OCI-LY7 (cell line): ENCODE measurements at regions of chr19 and their contacts with region 1.

Region 1: DNA sequence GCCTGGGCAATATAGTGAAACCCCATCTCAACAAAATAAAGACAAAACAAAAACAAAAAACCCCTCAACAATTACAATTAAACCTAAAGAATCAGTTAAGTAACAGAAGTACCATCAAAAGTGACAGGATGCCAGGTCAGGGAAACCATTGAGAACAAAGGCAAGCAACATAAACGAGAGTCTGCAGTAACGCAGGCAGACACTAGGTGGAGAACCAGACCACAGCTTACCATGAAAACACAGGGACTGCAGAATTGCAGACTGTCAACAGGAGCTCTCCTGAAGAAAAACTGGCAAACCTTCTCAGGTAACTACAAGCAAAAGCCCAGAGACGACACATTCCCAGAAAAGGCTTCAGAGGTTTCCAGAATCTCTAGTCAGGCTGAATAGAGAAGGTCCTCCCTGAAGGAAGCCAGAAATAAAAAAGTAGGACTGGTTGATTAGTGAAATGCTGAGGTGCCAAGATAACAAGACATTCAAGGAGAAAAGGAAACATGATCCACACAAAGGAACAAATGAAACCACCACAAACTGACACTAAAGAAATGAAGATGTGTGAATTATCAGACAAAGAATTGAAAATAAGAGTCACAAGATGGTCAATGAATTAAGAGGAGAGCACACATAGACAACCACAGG is 2.2 kb upstream of the ZNF665 start:
- DNase-seq: peak; percentile 87
- H3K4me3 ChIP-seq: no peak overlapping the region
- H3K27ac ChIP-seq: no peak overlapping the region
- H3K4me1 ChIP-seq: peaks cover 35% of the 10 kb centered on the region
- CTCF ChIP-seq: peak; percentile 91

Region 2: DNA sequence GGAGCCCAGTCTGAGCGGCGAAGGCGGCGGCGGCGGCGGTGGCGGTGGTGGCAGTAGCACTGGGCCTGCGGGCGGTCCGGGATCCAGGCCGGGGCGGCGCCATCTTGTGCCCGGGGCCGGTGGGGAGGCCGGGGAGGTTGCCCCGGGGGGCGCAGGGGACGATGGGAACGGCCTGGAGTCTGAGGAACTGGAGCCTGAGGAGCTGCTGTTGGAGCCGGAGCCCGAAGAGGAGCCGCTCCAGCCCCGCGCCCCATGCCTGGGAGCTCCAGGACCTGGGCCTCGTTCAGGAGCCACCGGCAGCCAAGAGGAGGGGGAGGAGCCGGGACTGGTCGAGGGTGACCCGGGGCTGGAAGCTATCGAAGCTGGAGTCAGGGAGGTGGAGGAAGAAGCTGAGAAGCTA is 385.6 kb before region 1 on chr19:
- CTCF ChIA-PET with region 1: no interaction called
- POLR2A ChIA-PET with region 1: no interaction called
- intact Hi-C with region 1: no loop called
- DNase-seq: no peak
- H3K4me3 ChIP-seq: no peak overlapping the region
- H3K27ac ChIP-seq: no peak overlapping the region
- H3K4me1 ChIP-seq: no peaks in the 10 kb centered on the region
- CTCF ChIP-seq: no peak

Region 3: DNA sequence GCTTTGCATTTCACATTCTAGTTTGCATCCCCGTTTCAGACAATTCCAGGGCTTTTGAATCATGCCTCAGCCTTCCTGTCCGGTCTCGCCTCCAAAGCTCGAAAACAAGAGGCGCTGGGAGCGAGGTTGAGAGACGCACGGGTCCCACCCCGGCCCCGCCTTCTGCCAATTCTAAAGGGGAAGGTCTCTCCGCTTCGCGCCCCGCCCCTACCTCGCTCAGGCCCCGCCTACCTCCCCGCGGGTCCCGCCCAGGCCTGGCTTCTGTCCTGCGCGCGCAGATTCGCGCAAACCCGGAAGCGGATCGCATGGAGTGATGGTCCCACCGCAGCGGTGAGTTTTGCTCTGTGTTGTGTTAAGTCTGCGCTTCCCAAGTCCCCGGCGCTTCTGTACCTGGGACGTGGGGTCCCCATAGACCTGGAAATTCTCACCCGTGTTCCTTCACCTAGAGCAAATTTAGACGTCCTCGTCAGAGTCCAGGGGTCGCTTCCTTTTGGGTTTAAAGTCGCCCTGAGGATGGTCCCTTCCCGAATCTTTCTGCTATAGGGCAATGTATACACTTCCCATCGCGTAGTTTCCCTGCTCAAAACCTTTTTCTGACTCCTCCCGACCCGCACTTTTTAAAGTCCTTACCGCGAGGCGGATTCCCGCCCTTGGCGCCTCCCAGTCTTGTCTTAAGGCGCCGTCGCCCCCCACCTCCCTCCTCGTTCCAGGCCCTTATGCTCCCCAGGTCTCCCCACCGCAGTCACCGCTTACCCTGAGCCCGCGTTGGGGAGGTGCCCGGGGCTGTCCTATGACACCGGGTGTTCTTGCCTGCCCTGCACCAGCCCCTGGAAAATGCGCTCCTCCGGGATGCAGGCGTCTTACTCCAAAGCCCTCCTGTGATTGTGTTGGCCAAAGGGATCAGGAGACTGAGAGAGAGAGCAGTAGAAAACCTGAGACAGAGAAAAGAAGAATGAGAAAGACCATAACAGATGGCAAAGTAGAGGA is 138.4 kb after region 1 on chr19 and contains the start of gene ZNF845:
- CTCF ChIA-PET with region 1: no interaction called
- POLR2A ChIA-PET with region 1: no interaction called
- intact Hi-C with region 1: loop called (anchors 10 kb)
- DNase-seq: peak; percentile 91
- H3K4me3 ChIP-seq: peak within 1 kb of the TSS; percentile 92
- H3K27ac ChIP-seq: peak within 1 kb of the TSS; percentile 31
- H3K4me1 ChIP-seq: peaks cover 5% of the 10 kb centered on the region
- CTCF ChIP-seq: no peak
- total RNA-seq, gene ZNF845: 7.2 and 7.7 TPM in 2 replicates

Region 4: GRCh38 chr19:53365134-53365898 is 169.9 kb after region 1 on chr19 and contains the start of gene ZNF525:
- CTCF ChIA-PET with region 1: no interaction called
- POLR2A ChIA-PET with region 1: no interaction called
- intact Hi-C with region 1: loop called (anchors 5 kb)
- DNase-seq: peak; percentile 93
- H3K4me3 ChIP-seq: peak within 1 kb of the TSS; percentile 95
- H3K27ac ChIP-seq: peak within 1 kb of the TSS; percentile 36
- H3K4me1 ChIP-seq: peaks cover 13% of the 10 kb centered on the region
- CTCF ChIP-seq: peak; percentile 23; the same call in 1 of the 2 replicates
- total RNA-seq, gene ZNF525: 20.2 and 21.0 TPM in 2 replicates

Region 5: DNA sequence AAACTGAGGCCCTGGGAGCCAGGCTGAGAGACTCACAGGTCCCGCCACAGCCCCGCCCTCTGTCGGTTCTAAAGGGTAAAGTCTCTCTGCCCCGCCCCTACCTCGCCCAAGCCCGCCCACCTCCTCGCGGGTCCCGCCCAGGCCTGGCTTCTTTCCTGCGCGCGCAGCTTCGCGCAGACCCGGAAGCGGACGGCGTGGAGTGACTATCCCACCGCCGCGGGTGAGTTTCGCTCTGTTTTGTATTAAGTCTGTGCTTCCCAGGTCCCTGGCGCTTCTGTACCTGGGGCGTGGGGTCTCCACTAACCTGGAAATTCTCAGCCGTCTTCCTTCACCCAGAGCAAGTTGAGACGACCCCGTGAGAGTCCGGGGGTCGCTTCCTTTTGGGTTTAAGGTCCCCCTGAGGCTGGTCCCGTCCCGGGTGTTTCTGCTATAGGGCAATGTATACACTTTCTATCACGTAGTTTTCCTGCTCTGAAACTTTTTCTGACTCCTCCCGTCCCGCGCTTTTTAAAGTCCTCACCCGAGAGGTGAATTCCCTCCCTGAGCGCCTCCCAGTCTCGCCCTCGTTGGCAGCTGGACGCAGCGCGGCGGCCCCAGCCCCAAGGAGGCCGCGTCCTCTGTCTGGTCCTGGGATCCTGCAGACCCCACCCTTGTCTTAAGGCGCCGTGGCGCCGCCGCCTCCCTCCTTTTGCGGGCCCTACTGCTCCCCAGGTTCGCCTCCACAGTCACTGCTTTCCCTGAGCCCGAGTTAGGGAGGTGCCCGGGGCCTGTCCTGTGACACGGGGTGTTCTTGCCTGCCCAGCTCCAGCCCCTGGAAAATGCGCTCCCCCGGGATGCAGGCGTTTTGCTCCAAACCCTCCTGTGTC is 199.8 kb after region 1 on chr19 and contains the start of gene ZNF765:
- CTCF ChIA-PET with region 1: no interaction called
- POLR2A ChIA-PET with region 1: no interaction called
- intact Hi-C with region 1: loop called (anchors 10 kb)
- DNase-seq: peak; percentile 92
- H3K4me3 ChIP-seq: peak within 1 kb of the TSS; percentile 87
- H3K27ac ChIP-seq: peak within 1 kb of the TSS; percentile 38
- H3K4me1 ChIP-seq: peaks cover 15% of the 10 kb centered on the region
- CTCF ChIP-seq: peak; percentile 47
- total RNA-seq, gene ZNF765: 14.6 and 16.2 TPM in 2 replicates

Region 6: GRCh38 chr19:53431399-53432087 is 236.2 kb after region 1 on chr19 and contains the start of gene ZNF761:
- CTCF ChIA-PET with region 1: no interaction called
- POLR2A ChIA-PET with region 1: no interaction called
- intact Hi-C with region 1: loop called (anchors 5 kb)
- DNase-seq: peak; percentile 92
- H3K4me3 ChIP-seq: peak within 1 kb of the TSS; percentile 84
- H3K27ac ChIP-seq: peak within 1 kb of the TSS; percentile 14
- H3K4me1 ChIP-seq: peaks cover 10% of the 10 kb centered on the region
- CTCF ChIP-seq: 0 out of 2 replicates have a peak, but pooled peaks have one; percentile 18
- total RNA-seq, gene ZNF761: 11.0 and 14.0 TPM in 2 replicates

Region 7: GRCh38 chr19:53511933-53512374 is 316.6 kb after region 1 on chr19:
- CTCF ChIA-PET with region 1: no interaction called
- POLR2A ChIA-PET with region 1: no interaction called
- intact Hi-C with region 1: loop called (anchors 1 kb)
- DNase-seq: peak; percentile 59
- H3K4me3 ChIP-seq: no peak overlapping the region
- H3K27ac ChIP-seq: no peak overlapping the region
- H3K4me1 ChIP-seq: no peaks in the 10 kb centered on the region
- CTCF ChIP-seq: peak; percentile 78